ENCODE measurements at regions of chr2 and their contacts with region 1.

Region 1: DNA sequence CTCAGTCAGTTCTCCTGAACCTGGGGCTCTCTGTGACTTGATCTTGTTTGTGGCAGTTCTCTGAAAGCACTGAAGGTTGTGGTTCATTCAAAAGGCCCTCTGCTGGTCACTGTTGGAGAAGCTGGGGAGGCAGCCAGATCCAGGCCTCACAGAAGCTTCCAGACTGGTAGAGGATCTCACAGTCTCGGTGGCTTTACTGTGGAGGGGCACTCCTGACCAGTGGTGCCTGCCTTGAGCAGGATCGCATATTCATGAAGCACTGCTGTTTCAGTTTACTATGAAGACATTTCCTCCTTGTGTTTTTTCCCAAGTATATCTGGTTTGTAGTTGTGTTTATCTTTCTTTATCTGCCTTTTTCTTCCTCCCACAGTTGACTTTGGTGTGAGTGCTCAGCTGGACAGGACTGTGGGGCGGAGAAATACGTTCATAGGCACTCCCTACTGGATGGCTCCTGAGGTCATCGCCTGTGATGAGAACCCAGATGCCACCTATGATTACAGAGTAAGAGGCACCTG is 133.9 kb downstream of the MAP4K4 start:
- DNase-seq: peak in 2 of 4 donors; percentile 50 to 64
- ATAC-seq: peak; percentile 91
- H3K4me3 ChIP-seq: no peak overlapping the region
- H3K27ac ChIP-seq: peak overlapping the region; percentile 3 to 40
- H3K4me1 ChIP-seq: peaks cover 2 to 46% of the 10 kb centered on the region in 2 donors
- H3K27me3 ChIP-seq: no peaks in the 10 kb centered on the region
- CTCF ChIP-seq: peak; percentile 51 to 81

Region 2: DNA sequence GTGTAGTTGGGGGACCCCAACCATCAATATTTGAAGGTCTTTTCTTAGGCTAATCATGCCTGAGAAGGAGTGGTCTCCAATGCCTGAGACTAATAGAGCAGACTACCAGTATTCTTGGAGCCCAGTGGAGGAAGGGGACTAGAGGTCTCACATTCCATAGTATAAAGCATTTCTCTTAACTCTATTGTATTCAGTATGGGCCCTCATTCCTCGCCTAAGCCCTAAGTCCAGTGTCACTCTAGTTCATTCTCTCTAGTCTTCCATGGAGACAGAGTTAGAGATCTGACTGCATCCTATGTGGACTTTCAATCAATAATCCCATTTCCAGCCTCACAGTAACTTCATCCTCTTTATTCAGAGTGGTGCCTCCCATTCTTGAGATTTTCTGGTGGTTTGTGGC is 163.6 kb before region 1 on chr2:
- intact Hi-C with region 1: no loop called
- DNase-seq: no peak
- ATAC-seq: no peak
- H3K4me3 ChIP-seq: no peak overlapping the region
- H3K27ac ChIP-seq: no peak overlapping the region
- H3K4me1 ChIP-seq: no peaks in the 10 kb centered on the region
- H3K27me3 ChIP-seq: no peaks in the 10 kb centered on the region
- CTCF ChIP-seq: no peak

Region 3: DNA sequence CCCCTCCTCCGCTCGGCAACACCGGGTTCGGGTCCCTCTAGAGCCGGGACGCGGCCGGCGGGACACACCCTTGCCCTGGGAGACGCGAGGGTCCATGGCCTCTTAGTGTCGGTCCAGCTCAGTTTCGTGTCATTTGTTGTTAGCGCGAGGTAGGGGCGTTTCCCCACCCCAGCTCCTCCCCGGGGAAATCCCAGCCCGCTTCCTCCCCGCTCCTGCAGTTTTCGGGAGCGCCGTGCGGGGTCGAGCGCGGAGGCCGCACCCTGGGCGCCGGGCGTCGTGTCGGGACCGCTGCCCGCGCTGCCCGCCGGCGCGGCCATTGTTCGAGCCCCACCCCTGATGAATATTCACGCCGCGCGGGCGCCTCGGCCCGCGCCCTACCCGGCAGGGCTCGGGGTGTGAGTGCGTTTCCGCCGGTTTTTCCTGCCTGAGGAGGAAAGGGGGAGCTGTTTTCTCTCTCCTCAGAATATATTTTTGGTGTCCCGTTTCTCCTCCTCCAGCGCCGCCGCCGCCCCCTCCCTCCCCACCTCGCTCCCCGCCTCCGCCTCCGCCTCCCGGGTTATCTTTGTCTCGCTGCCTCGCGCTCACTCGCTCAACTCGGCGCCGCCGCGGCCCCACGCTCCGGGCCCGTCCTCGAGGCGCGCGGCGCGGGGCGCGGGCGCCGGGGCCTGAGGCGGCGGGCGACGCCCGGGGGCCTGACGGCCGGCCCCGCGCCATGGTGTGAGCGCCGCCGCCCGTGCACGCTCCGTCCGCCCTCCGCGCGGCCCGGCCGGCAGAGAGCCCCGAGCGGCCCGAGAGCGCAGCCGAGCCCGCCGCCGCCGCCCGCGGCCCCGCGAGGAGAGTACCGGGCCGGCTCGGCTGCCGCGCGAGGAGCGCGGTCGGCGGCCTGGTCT is 134.0 kb before region 1 on chr2 and contains the start of gene MAP4K4:
- intact Hi-C with region 1: loop called in 1 of 2 experiments (anchors 5 kb)
- DNase-seq: peak; percentile 82 to 96 (median 89)
- ATAC-seq: peak; percentile 83
- H3K4me3 ChIP-seq: peak within 1 kb of the TSS; percentile 54 to 68
- H3K27ac ChIP-seq: peak within 1 kb of the TSS; percentile 78 to 85
- H3K4me1 ChIP-seq: peaks cover 0 to 47% of the 10 kb centered on the region in 2 donors
- H3K27me3 ChIP-seq: peaks cover 0 to 8% of the 10 kb centered on the region in 2 donors
- CTCF ChIP-seq: peak in 1 of 2 donors; percentile 9
- polyA plus RNA-seq, gene MAP4K4: 115 to 143 (median 134) TPM

Measured in left lung (tissue), 14 donors.